HEK293 (cell line): ENCODE measurements at regions of chr14 and their contacts with region 1.

Region 1: DNA sequence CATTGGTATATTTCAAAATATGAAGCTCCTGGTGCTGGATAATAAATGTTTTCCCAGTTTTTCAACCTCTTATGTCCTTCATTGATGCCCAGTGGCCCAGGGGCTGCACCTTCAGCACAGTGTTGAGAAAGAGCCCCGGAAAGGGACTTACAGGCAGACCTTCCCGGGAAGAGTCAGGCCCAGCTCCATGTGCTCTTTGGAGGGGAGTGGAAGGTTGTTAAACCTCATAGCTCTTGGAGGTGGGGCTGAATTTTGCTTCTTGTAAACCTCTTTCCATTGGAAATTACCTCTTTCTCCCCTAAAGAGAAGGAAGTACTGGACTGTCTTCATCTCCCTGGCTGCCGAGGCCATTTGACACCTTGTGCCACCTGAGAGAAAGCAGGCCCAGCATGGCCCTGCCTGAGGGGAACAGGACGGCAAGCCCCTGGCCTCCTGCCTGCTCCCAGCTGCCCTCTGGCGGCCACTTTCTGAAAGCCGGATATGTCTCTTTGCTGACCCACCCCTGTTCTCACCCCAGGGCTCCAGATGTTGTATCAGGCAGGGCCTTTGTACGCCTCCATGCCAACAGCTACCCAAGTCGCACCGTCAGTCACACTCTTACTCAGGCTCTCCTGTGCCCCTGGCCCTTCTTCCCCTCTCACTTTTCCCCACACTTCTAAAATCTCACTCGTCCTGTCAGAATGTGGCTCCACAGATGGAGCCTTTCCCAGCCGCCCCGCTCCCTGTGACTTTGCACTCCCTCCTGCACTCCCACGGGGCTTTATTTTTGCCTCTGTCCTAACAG is 43.0 kb downstream of the EVL start:
- H3K4me3 ChIP-seq: no peak overlapping the region
- H3K27ac ChIP-seq: no peak overlapping the region
- H3K4me1 ChIP-seq: peaks cover 10% of the 10 kb centered on the region
- CTCF ChIP-seq: peak; percentile 92

Region 2: DNA sequence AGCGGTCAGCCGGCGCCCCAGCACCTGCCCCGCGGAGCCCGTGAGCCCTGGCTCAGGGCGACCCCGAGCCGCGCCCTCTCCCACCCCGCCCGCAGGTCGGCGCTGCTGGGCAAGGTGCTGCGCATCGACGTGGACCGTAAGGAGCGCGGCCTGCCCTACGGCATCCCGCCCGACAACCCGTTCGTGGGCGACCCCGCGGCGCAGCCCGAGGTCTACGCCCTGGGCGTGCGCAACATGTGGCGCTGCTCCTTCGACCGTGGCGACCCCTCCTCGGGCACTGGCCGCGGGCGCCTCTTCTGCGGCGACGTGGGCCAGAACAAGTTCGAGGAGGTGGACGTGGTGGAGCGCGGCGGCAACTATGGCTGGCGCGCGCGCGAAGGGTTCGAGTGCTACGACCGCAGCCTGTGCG is 448.9 kb before region 1 on chr14:
- CTCF ChIA-PET with region 1: no interaction called
- POLR2A ChIA-PET with region 1: no interaction called
- H3K4me3 ChIP-seq: no peak overlapping the region
- H3K27ac ChIP-seq: no peak overlapping the region
- H3K4me1 ChIP-seq: peaks cover 2% of the 10 kb centered on the region
- CTCF ChIP-seq: no peak

Region 3: DNA sequence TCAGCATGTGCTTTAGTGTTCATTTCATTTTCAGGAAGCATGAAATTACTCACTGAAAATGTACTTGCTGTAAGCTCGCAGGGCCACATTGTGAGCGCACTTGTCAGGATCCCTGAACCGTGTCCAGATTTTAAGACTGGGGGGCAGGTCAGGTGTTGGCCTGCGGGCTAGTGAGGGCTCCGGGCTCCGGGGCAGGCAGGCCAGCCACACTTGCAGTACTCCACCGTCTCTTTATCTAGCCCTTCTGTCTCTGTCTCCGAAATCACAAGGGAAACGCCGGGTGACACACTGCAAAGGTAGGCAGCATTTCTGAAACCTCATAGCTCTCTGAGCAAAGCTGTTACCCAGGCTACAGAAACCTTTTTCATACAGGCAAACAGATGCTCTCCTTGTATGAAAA is 216.3 kb before region 1 on chr14:
- CTCF ChIA-PET with region 1: no interaction called
- POLR2A ChIA-PET with region 1: no interaction called
- H3K4me3 ChIP-seq: no peak overlapping the region
- H3K27ac ChIP-seq: no peak overlapping the region
- H3K4me1 ChIP-seq: no peaks in the 10 kb centered on the region
- CTCF ChIP-seq: no peak

Region 4: DNA sequence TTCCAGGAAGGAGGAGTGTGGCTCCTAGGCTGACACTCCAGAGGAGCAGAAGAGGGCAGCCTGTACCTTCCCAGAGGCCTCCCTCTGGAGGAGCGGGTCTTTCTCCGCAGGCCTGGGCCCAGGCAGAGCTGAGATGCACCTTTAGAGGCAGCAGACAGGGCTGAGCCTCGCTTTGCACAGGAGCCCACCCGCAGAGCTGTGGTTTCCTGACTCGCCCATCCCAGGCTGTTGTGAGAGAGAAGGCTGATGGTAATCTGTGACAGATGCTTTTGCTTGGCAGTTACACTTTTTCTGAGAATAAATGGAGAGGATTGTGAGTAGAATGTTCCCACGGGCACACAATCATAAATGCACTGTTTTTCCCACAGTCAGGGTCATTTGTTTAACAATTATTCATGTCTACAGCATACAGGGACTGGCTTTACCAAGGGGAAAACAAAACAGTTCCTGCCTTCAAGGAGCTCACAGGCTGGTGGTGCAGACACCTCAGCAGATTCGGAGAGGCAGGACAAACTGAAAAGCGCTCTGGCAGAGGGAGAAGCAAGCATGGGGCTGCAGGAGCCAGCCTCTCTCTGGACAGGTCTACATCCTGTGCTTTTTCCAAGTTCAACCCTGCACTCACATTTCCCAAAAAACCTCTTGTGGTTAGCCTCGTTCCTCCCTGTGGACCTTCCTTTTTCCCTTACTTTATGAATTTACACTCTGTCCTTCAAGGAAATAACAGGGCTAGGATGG is 29.1 kb before region 1 on chr14:
- CTCF ChIA-PET with region 1: interaction called, 20 read pairs
- POLR2A ChIA-PET with region 1: no interaction called
- H3K4me3 ChIP-seq: no peak overlapping the region
- H3K27ac ChIP-seq: peak overlapping the region; percentile 54; the same call in 1 of the 2 replicates
- H3K4me1 ChIP-seq: peaks cover 15% of the 10 kb centered on the region
- CTCF ChIP-seq: peak; percentile 94

Region 5: GRCh38 chr14:100096570-100096971 is 11.7 kb before region 1 on chr14:
- CTCF ChIA-PET with region 1: interaction called, 10 read pairs
- POLR2A ChIA-PET with region 1: no interaction called
- H3K4me3 ChIP-seq: no peak overlapping the region
- H3K27ac ChIP-seq: no peak overlapping the region
- H3K4me1 ChIP-seq: no peaks in the 10 kb centered on the region
- CTCF ChIP-seq: no peak

Region 6: DNA sequence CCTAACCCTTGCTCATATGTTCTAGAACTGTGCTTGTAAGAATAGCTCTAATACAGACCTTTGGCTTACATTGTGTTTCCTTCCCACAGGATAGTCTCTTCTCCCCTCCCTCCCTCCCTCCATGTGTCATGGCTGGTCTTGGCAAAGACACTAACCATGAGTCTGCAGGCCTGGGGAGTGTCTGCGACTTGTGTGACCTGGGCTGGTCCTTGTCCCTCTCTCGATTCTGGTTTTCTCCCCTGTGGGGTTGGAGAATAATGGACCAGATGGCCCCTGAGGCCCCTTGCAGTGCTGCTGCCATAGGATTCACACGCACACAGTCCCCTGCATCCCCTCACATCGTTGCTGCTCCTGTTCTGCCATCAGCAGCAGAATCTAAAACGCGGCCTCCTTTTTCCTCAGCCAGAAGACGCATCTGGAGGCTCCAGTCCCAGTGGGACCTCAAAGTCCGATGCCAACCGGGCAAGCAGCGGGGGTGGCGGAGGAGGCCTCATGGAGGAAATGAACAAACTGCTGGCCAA is 21.0 kb after region 1 on chr14:
- CTCF ChIA-PET with region 1: interaction called, 10 read pairs
- POLR2A ChIA-PET with region 1: no interaction called
- H3K4me3 ChIP-seq: no peak overlapping the region
- H3K27ac ChIP-seq: no peak overlapping the region
- H3K4me1 ChIP-seq: no peaks in the 10 kb centered on the region
- CTCF ChIP-seq: no peak

Region 7: DNA sequence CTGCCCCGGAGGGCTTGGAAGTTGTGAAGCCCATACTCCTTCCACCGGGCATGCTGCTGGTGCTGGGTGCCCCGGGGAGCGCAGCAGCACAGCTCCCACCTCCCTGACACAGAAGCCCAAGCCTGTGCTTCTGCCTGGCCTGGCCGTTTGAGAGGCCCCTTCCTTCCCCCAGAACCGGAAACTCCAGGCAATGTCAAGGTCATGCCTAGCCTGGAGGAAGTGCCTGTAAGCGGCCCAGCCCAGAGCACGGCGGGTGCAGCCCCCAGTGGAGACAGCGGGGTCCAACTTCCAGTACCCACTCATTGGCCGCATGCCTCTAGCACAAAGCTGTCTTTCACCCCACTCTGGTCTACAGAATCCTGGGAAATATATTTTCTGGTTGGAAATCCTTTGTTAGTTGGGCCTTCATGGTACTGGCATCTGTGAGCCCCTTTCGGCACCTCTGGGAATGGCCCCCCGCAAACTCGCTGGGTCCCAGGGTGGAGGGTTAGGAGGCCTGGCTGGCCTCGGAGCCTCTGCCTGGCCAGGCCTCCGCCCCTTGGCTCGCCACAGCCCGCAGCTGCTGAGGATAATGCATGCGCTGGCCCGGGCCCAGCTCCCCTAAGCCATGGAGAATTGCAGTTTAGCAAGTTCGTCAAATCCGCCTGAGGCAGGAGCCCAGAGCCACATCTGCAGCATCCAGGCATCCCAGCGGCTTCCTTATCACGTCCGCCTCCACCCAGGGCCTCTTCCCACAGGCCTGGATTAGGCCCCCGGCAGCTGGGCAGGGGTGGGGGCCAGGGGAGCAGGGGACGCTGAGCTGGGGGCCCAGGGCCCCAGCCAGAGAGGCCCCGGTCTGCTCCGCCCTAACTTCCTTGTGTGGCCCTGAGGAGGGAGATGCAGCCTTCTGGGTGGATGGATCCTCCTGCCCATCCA is 569.6 kb after region 1 on chr14:
- CTCF ChIA-PET with region 1: no interaction called
- POLR2A ChIA-PET with region 1: no interaction called
- H3K4me3 ChIP-seq: no peak overlapping the region
- H3K27ac ChIP-seq: no peak overlapping the region
- H3K4me1 ChIP-seq: peaks cover 2% of the 10 kb centered on the region; the same call in 1 of the 2 replicates
- CTCF ChIP-seq: no peak